ENCODE measurements at regions of chr5 and their contacts with region 1.

Region 1: DNA sequence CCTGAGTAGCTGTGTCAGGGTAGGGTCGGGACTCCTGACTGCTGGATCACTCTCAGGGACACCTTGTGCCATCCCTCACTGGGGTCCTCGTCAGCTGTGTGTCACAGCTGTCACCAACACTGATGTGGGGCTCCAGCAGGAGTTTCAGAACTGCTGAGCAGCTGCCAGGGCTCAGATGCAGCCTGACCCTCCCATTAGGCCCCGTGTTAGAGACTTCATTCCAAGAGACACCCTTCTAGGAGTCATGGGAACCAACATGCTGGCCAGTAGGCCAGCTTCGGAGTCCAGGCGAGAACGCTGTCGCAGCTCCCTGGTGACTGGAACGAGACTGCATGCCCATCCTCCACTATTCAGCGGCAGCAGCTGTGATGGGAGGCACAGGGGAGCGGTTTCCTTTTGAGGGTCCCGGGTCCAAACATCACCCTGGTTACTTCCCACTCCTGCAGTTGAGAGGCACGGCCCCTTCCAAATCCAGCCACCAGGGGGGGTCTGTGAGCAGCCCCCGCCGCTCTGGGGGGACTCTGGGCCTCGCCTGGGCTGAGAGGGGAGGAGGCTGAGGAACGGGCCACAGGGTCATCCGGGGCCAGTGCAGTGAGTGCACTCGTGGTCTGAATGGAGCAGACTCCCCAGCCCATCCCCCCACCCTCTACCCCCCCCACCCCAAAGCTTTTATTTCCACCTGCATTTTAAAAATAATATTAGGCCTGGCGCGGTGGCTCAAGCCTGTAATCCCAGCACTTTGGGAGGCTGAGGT is 12.6 kb upstream of the TCF7 start:
- DNase-seq: peak; percentile 83
- ATAC-seq: peak; percentile 53
- H3K4me3 Mint-ChIP-seq: no peak overlapping the region
- H3K27ac Mint-ChIP-seq: no peak overlapping the region
- H3K4me1 Mint-ChIP-seq: peaks cover 87% of the 10 kb centered on the region
- H3K27me3 Mint-ChIP-seq: no peaks in the 10 kb centered on the region

Region 2: GRCh38 chr5:134004592-134005375 is 97.1 kb before region 1 on chr5 and contains the start of gene VDAC1:
- CTCF ChIA-PET with region 1: no interaction called
- POLR2A ChIA-PET with region 1: no interaction called
- DNase-seq: peak; percentile 92
- ATAC-seq: peak; percentile 83
- H3K4me3 Mint-ChIP-seq: peak within 1 kb of the TSS; percentile 92
- H3K27ac Mint-ChIP-seq: peak within 1 kb of the TSS; percentile 98
- H3K4me1 Mint-ChIP-seq: peaks cover 46% of the 10 kb centered on the region
- H3K27me3 Mint-ChIP-seq: no peaks in the 10 kb centered on the region
- total RNA-seq, gene VDAC1: 250 to 259 TPM

Region 3: DNA sequence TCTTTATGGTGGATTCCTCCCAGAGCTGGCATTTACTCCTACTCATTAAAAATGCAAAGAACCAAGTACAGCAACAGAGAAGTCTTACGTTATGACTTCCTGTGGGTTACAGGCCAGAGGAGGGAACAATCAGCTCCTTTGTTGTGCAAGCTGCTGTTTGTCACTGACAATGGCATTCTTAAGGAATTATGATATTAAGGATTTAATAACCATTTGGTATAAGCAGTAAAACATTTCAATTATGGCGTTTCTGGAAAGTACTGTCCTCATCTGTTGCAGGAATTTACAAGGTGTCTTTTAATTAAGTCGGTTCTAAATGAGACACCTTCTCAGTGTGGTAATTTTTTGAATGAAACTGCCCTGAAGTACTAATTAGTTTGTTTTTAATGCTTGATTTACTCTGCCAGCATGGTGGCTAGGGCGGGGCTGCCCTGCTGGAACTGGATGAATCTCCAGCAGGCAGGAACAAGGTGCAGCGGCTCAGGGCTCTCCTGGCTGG is 48.0 kb before region 1 on chr5:
- CTCF ChIA-PET with region 1: interaction called, 11 read pairs
- POLR2A ChIA-PET with region 1: no interaction called
- DNase-seq: no peak
- ATAC-seq: peak; percentile 83
- H3K4me3 Mint-ChIP-seq: peak overlapping the region; percentile 22
- H3K27ac Mint-ChIP-seq: peak overlapping the region; percentile 87
- H3K4me1 Mint-ChIP-seq: peaks cover 30% of the 10 kb centered on the region
- H3K27me3 Mint-ChIP-seq: no peaks in the 10 kb centered on the region

Region 4: DNA sequence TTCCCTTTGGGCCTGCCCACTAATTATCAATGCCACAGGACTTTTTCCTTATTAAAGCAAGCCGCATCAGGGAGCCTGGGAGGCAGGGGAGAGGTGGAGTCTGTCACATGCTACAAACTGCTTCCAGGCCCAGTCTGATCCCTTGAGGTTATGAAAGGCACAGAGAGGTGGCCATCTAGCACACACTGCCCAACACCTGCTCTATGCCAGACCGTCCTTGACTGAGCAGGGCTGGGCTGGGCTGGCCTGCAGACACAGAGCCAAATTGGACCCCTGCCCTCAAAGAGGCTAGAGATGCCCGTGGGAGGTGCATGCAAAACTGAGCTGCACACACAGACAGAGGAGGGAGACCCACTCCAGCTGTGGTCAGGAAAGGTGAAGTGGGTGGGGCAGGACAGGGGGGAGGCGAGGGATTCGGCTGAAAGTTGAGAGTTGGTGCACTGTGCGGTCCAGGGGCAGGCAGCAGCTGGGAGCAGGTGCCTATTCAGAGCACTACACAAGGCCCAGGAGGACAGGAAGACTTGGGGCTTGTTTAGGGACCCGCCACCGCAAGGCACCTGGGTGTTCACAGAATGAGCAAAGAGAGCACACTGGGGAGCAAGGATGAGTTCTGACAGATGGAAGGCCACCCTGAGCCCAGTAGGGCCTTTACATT is 23.8 kb before region 1 on chr5:
- CTCF ChIA-PET with region 1: interaction called, 111 read pairs
- POLR2A ChIA-PET with region 1: interaction called, 8 read pairs
- DNase-seq: no peak
- ATAC-seq: peak; percentile 35
- H3K4me3 Mint-ChIP-seq: no peak overlapping the region
- H3K27ac Mint-ChIP-seq: peak overlapping the region; percentile 82
- H3K4me1 Mint-ChIP-seq: peaks cover 56% of the 10 kb centered on the region
- H3K27me3 Mint-ChIP-seq: no peaks in the 10 kb centered on the region

Region 5: GRCh38 chr5:134113902-134114875 is 12.3 kb after region 1 on chr5 and contains the start of gene TCF7:
- CTCF ChIA-PET with region 1: interaction called, 7 read pairs
- POLR2A ChIA-PET with region 1: interaction called, 27 read pairs
- DNase-seq: peak; percentile 79
- ATAC-seq: peak; percentile 81
- H3K4me3 Mint-ChIP-seq: peak within 1 kb of the TSS; percentile 75
- H3K27ac Mint-ChIP-seq: peak within 1 kb of the TSS; percentile 68
- H3K4me1 Mint-ChIP-seq: peaks cover 76% of the 10 kb centered on the region
- H3K27me3 Mint-ChIP-seq: peaks cover 10% of the 10 kb centered on the region
- total RNA-seq, gene TCF7: 93.4 to 97.8 TPM

Region 6: DNA sequence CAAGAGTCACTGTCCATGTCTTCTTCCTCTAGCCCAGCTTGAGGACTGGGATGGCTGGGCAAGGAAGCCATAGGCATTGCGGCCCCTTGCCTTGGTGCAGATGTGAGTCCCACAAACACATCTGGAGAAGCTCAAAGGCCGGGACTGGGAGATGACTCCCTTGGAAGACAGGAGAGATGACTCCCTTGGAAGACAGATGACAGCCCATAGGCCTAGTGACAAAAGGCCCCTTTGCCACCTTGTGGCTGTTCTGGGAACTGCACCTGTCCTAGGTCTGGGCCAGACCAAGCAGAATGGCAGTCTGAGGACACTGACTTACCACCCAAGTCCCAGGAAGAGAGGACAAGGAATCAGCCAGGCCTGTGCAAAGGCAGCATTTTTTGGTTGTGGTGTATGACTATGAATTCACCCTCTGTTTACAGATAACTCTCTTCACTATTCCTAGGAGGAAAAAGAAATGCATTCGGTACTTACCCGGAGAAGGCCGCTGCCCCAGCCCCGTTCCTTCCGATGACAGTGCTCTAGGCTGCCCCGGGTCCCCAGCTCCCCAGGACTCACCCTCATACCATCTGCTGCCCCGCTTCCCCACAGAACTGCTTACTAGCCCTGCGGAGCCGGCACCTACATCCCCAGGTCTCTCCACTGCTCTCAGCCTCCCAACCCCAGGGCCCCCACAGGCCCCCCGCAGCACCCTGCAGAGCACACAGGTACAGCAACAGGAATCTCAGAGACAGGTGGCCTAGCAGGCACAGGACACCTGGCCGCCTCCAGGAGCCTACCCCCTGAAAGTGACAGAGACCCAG is 44.1 kb after region 1 on chr5:
- CTCF ChIA-PET with region 1: interaction called, 11 read pairs
- POLR2A ChIA-PET with region 1: interaction called, 16 read pairs
- DNase-seq: peak; percentile 87
- ATAC-seq: peak; percentile 77
- H3K4me3 Mint-ChIP-seq: no peak overlapping the region
- H3K27ac Mint-ChIP-seq: no peak overlapping the region
- H3K4me1 Mint-ChIP-seq: peaks cover 31% of the 10 kb centered on the region
- H3K27me3 Mint-ChIP-seq: no peaks in the 10 kb centered on the region

Region 7: GRCh38 chr5:134394932-134395331 is 293.1 kb after region 1 on chr5:
- CTCF ChIA-PET with region 1: no interaction called
- POLR2A ChIA-PET with region 1: no interaction called
- DNase-seq: no peak
- ATAC-seq: no peak
- H3K4me3 Mint-ChIP-seq: no peak overlapping the region
- H3K27ac Mint-ChIP-seq: no peak overlapping the region
- H3K4me1 Mint-ChIP-seq: no peaks in the 10 kb centered on the region
- H3K27me3 Mint-ChIP-seq: no peaks in the 10 kb centered on the region

Measured in activated CD8-positive, alpha-beta T cell treated with anti-CD3 and anti-CD28 coated beads, Interleukin-2, amount 10 ng/mL, durations not matched to agents 7 days and 5 days (primary cell).